SK-N-SH (cell line): ENCODE measurements at regions of chr12 and their contacts with region 1.

Region 1: GRCh38 chr12:1650260-1650977 is 21.4 kb downstream of the WNT5B start:
- DNase-seq: no peak
- H3K4me3 ChIP-seq: no peak overlapping the region
- H3K27ac ChIP-seq: no peak overlapping the region
- H3K4me1 ChIP-seq: peaks cover 0 to 11% of the 10 kb centered on the region in 2 experiments; a peak in 1 of 4 replicates
- H3K27me3 ChIP-seq: no peaks in the 10 kb centered on the region
- CTCF ChIP-seq: no peak
- EP300 ChIP-seq: no peak
- RAD21 ChIP-seq: no peak

Region 2: GRCh38 chr12:1634590-1635191 is 15.7 kb before region 1 on chr12:
- CTCF ChIA-PET with region 1: interaction called, 110 read pairs
- POLR2A ChIA-PET with region 1: interaction called, 3 read pairs
- DNase-seq: peak; percentile 83
- H3K4me3 ChIP-seq: peak overlapping the region in 1 of 2 experiments; percentile 37; a peak in 1 of 4 replicates
- H3K27ac ChIP-seq: no peak overlapping the region
- H3K4me1 ChIP-seq: peaks cover 0 to 10% of the 10 kb centered on the region in 2 experiments; a peak in 2 of 4 replicates
- H3K27me3 ChIP-seq: no peaks in the 10 kb centered on the region
- CTCF ChIP-seq: peak; percentile 84
- EP300 ChIP-seq: no peak
- RAD21 ChIP-seq: peak; percentile 84

Region 3: DNA sequence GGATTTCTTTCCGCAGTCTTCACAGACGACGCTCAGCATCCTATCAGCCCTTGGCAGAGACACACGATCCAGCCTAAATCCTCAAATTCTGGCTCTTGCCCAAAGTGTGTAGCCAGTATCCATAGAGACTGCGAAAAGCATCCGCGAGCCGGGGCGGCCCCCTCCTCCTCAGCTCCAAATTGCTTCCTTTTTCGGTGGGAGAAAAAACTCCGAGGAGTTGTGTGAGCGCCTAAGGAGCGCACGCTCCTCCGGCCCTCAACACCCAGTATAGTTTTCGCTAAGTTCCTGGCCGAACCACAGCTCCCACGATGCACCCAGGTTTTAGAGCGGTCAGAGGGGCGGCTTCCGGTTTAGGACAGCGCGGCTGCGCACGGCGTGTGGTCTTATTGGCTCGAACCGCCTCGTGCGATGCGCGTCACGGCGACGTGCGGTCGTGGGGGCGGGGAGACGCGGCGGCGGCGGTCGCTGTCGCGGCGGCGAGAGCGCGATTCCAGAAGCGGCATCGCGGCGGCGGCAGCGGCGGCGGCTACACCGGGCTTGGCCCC is 40.2 kb after region 1 on chr12 and contains the start of gene ADIPOR2:
- CTCF ChIA-PET with region 1: interaction called, 21 read pairs
- POLR2A ChIA-PET with region 1: no interaction called
- DNase-seq: peak; percentile 97
- H3K4me3 ChIP-seq: peak within 1 kb of the TSS; percentile 91 to 99
- H3K27ac ChIP-seq: peak within 1 kb of the TSS; percentile 91 to 94
- H3K4me1 ChIP-seq: peaks cover 3 to 5% of the 10 kb centered on the region in 2 experiments; a peak in 2 of 4 replicates
- H3K27me3 ChIP-seq: no peaks in the 10 kb centered on the region
- CTCF ChIP-seq: no peak
- EP300 ChIP-seq: no peak
- RAD21 ChIP-seq: no peak
- polyA plus RNA-seq, gene ADIPOR2: 17.1 and 19.5 TPM in 2 replicates

Region 4: DNA sequence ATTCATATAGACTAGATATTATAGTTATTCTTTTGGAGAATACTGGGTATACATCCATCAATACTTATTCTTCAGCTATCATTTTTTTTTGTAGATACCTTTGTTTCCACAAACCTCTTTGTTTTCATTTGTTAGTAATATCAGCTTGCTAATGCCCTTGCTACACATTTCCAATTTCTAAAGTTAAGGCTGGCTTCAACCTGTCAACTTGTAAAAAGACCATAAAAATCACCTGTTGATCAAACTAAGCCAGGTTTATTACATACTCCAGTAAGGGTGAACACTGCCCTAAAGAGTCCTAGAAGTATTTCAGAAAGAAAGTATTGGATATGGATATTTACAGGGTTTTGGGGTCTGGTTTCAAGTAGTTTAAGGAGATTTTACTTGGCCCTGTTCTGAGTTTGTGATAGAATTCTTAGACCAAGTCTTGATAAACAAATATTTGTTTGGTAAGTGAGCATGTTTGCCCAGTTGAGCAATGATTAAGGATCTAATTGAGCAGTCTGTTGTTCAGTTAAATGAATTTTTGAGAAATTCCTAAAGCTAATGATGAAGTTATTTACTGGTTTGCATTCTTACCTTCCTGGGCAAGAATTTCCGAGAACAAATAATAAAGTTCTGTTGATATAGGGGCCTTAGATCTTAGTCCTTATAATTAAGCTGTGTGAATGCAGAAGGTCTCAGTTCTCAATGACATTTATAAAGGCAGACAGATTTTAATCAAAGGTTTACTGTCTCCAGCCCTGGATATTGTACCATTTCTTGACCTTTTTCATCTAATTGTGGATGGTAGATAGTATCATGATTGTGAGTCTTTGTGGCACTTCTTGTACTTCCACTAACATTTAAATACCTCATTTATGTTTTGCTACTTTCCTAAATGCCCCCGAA is 117.2 kb after region 1 on chr12:
- CTCF ChIA-PET with region 1: interaction called, 17 read pairs
- POLR2A ChIA-PET with region 1: no interaction called
- DNase-seq: no peak
- H3K4me3 ChIP-seq: no peak overlapping the region
- H3K27ac ChIP-seq: no peak overlapping the region
- H3K4me1 ChIP-seq: no peaks in the 10 kb centered on the region; a peak in 1 of 4 replicates
- H3K27me3 ChIP-seq: no peaks in the 10 kb centered on the region
- CTCF ChIP-seq: no peak
- EP300 ChIP-seq: no peak
- RAD21 ChIP-seq: no peak

Region 5: GRCh38 chr12:1781772-1782171 is 131.4 kb after region 1 on chr12:
- CTCF ChIA-PET with region 1: interaction called, 35 read pairs
- POLR2A ChIA-PET with region 1: no interaction called
- DNase-seq: no peak
- H3K4me3 ChIP-seq: no peak overlapping the region
- H3K27ac ChIP-seq: no peak overlapping the region
- H3K4me1 ChIP-seq: peaks cover 4 to 29% of the 10 kb centered on the region in 2 experiments; a peak in 2 of 4 replicates
- H3K27me3 ChIP-seq: no peaks in the 10 kb centered on the region
- CTCF ChIP-seq: no peak
- EP300 ChIP-seq: no peak
- RAD21 ChIP-seq: no peak